HCT116 (cell line): ENCODE measurements at regions of chr10 and their contacts with region 1.

Region 1: DNA sequence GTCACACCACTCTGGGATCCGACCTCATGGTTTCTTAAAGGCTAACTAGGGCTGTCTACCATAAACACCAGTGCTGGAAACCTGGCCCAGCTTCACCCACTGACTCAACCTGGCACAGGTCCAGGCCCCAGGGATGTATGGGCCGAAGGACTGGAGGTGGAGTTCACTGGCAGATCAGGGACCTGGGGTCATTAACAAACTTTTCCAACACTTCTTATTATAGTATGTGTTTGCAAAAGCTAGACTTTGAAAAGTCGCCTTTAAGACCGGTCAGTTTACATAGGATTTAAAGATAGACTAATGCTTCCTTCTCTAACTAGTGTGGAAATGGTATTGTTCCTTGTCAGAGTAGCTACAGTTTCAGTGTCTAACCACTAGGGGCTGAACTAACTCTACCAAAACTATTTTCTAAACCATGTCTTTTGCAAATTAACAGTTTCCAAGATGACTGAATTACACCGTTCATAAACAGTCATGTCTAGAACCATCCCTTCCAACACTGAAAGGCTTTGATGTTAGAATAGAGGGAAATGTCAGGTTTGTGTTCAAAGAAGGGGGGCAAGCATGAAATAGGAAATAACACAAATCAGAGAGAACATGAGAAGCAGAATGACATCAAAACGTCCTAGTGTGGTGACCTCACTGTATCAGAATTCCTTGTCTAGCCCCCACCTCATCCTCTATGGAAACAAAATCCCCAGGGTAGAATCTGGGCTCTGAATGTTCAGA is 29.7 kb downstream of the STN1 start:
- DNase-seq: peak; percentile 61
- ATAC-seq: peak; percentile 68
- H3K4me3 ChIP-seq: no peak overlapping the region
- H3K27ac ChIP-seq: peak overlapping the region; percentile 7
- H3K4me1 ChIP-seq: peaks cover 43 to 52% of the 10 kb centered on the region in 2 experiments
- H3K27me3 ChIP-seq: no peaks in the 10 kb centered on the region
- CTCF ChIP-seq: peak in 2 of 3 experiments; percentile 85 to 99; a peak in 4 of 6 replicates
- POLR2A ChIP-seq: no peak
- RAD21 ChIP-seq: no peak

Region 2: DNA sequence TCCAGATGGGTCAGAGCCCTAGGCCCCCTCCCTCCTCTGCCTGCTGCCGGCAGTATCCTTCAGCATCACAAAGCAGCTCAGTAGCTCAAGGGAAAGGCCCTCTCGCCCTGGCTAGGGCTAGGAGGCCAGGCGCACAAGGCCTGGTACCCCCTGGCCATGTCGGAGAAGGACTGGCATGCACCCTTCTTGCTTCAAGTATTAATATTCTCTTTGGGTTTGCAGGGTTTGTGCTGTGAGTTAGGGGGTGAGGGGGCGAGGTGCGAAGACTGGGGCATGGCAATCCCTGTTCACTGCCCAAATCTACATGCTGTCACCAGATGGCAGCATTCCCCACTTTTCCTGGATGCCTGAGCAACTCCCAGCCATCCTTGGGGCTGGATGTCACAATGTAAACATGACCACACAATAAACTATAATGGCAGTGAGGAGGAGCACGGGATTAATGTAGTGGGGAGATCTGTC is 289.6 kb before region 1 on chr10:
- CTCF ChIA-PET with region 1: interaction called, 3 read pairs
- POLR2A ChIA-PET with region 1: no interaction called
- RAD21 ChIA-PET with region 1: no interaction called
- intact Hi-C with region 1: loop called (anchors 2 kb)
- DNase-seq: peak; percentile 66
- ATAC-seq: peak; percentile 97
- H3K4me3 ChIP-seq: no peak overlapping the region
- H3K27ac ChIP-seq: no peak overlapping the region
- H3K4me1 ChIP-seq: peaks cover 0 to 5% of the 10 kb centered on the region in 2 experiments; a peak in 2 of 4 replicates
- H3K27me3 ChIP-seq: no peaks in the 10 kb centered on the region
- CTCF ChIP-seq: peak; percentile 93 to 98 (median 95)
- POLR2A ChIP-seq: no peak
- RAD21 ChIP-seq: peak; percentile 98

Region 3: DNA sequence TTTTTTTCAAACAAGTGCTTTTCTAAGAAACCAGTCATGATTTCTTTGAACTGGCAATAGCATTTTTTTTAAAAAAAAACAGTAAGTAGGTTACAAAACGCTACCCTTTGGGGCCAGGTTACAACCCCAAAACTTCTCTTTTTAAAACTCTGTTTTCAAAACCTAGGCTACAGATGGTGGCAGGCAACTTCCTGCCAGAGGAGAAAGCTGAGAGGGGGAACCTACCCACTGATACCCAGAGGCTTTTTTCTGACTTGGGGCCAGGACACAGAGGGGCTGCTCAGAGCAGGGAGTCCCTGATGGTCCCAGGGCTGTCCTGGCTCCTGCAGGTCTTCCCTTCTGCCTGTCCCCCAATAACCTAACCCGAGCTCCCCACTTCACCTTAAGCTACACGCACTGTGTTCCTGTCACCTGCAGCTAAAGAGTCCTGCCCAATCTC is 22.8 kb after region 1 on chr10:
- CTCF ChIA-PET with region 1: interaction called, 7 read pairs
- POLR2A ChIA-PET with region 1: interaction called, 10 read pairs
- RAD21 ChIA-PET with region 1: no interaction called
- intact Hi-C with region 1: no loop called
- DNase-seq: no peak
- ATAC-seq: no peak
- H3K4me3 ChIP-seq: no peak overlapping the region
- H3K27ac ChIP-seq: no peak overlapping the region; the same call in 1 of the 2 replicates
- H3K4me1 ChIP-seq: peaks cover 50 to 53% of the 10 kb centered on the region in 2 experiments
- H3K27me3 ChIP-seq: no peaks in the 10 kb centered on the region
- CTCF ChIP-seq: no peak
- POLR2A ChIP-seq: no peak
- RAD21 ChIP-seq: no peak

Region 4: GRCh38 chr10:104045151-104046089 is 157.1 kb after region 1 on chr10:
- CTCF ChIA-PET with region 1: interaction called, 9 read pairs
- POLR2A ChIA-PET with region 1: no interaction called
- RAD21 ChIA-PET with region 1: interaction called, 5 read pairs
- intact Hi-C with region 1: loop called (anchors 2 kb)
- DNase-seq: peak; percentile 74
- ATAC-seq: peak; percentile 93
- H3K4me3 ChIP-seq: no peak overlapping the region
- H3K27ac ChIP-seq: no peak overlapping the region
- H3K4me1 ChIP-seq: peaks cover 15 to 38% of the 10 kb centered on the region in 2 experiments
- H3K27me3 ChIP-seq: no peaks in the 10 kb centered on the region
- CTCF ChIP-seq: peak in 2 of 3 experiments; percentile 90 to 94; a peak in 4 of 6 replicates
- POLR2A ChIP-seq: no peak
- RAD21 ChIP-seq: no peak

Region 5: DNA sequence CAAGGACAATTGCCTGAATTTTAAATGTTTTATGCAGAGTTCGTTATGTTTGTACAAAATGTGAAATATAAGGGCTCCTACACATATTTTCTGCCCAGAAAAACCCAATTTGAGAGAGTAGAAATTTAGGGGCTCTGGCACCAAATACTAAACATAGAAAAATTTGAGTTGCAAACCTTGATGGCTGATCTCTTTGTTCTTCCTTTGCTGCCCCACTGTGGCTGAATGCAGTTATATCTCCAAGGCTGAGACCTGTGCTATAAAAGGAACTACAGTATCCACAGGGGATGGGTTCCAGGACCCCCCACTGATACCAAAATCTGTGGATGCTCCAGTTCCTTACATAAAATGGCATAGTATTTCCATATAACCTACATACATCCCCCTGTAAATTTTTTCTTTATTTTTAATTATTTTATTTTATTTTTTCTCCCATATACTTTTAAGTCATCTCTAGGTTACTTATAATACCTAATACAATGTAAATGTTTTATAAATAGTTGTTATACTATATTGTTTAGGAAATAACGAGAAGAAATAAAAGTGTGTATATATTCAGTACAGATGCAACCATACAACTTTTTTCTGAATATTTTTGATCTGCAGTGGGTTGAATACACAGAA is 321.4 kb after region 1 on chr10:
- CTCF ChIA-PET with region 1: interaction called, 10 read pairs
- POLR2A ChIA-PET with region 1: no interaction called
- RAD21 ChIA-PET with region 1: interaction called in 1 of 2 experiments, 3 read pairs
- intact Hi-C with region 1: loop called (anchors 1 kb)
- DNase-seq: peak; percentile 41
- ATAC-seq: peak; percentile 93
- H3K4me3 ChIP-seq: no peak overlapping the region
- H3K27ac ChIP-seq: no peak overlapping the region
- H3K4me1 ChIP-seq: no peaks in the 10 kb centered on the region
- H3K27me3 ChIP-seq: no peaks in the 10 kb centered on the region
- CTCF ChIP-seq: peak; percentile 81 to 92 (median 83)
- POLR2A ChIP-seq: no peak
- RAD21 ChIP-seq: peak; percentile 95

Region 6: DNA sequence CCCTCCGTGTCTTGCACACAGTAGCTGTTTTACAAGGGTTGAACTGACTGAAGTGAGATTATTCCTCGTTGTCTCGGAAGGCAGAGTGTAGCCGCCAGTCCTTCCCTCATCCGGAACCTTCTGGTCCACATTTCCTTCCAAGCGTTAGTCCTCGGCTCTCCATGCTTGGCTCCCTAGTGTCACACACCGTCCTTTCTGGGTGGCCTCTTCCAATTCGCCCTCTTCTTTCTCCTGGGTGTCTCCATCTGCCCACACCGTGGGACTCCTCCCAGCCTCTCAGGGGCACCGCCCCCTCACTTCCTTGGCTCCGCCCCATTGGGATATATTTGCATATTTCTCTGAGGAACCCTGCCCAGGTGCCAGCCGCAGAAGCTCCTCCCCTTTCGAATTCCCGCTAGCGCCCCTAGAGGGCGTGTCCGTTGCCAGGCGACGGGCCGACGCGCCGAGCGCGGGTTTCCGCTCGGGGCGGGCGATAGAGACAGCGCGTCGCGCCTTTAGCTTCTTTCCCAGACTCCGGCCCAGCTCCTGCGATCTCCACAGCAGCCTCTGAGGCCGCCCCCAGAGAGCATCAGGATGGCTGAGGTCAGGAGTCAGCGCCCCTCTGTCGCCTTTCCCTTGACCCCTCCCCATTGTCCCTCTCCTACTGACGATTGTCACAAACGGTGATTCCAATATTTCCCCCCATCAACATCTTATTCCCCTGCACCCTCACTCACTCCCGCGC is 465.2 kb after region 1 on chr10 and contains the start of gene CFAP58:
- CTCF ChIA-PET with region 1: no interaction called
- POLR2A ChIA-PET with region 1: no interaction called
- RAD21 ChIA-PET with region 1: no interaction called
- intact Hi-C with region 1: loop called (anchors 5 kb)
- DNase-seq: peak; percentile 89
- ATAC-seq: peak; percentile 97
- H3K4me3 ChIP-seq: peak within 1 kb of the TSS; percentile 20 to 38
- H3K27ac ChIP-seq: no peak within 1 kb of the TSS
- H3K4me1 ChIP-seq: peaks cover 7 to 33% of the 10 kb centered on the region in 2 experiments; a peak in 3 of 4 replicates
- H3K27me3 ChIP-seq: no peaks in the 10 kb centered on the region; the same call in 1 of the 2 replicates
- CTCF ChIP-seq: peak; percentile 41 to 83 (median 75); a peak in 4 of 6 replicates
- POLR2A ChIP-seq: no peak
- RAD21 ChIP-seq: peak; percentile 9; the same call in 1 of the 2 replicates
- total RNA-seq, gene CFAP58: 0.91 TPM